Activated T-helper 1 cell treated with anti-CD3 and anti-CD28 coated beads, Interleukin-12 subunit alpha, Interleukin-12 subunit beta, Interleukin-2, Interleukin-4 antibody, amounts not matched to agents 30 ng/mL and 10 ng/mL and 1 ng/mL, durations not matched to agents 14 hours and 24 hours and 36 hours (primary cell): ENCODE measurements at regions of chr14 and their contacts with region 1.

Region 1: GRCh38 chr14:64540208-64541157 is at the start of gene HSPA2:
- DNase-seq: peak; percentile 94
- H3K4me3 Mint-ChIP-seq: peak within 1 kb of the TSS; percentile 91
- H3K27ac Mint-ChIP-seq: peak within 1 kb of the TSS; percentile 92
- H3K4me1 Mint-ChIP-seq: peaks cover 42% of the 10 kb centered on the region
- H3K27me3 Mint-ChIP-seq: peaks cover 56% of the 10 kb centered on the region
- total RNA-seq, gene HSPA2: 11.2 and 11.6 TPM in 2 replicates

Region 2: GRCh38 chr14:64266239-64266638 is 274.2 kb before region 1 on chr14:
- intact Hi-C with region 1: no loop called
- DNase-seq: no peak
- H3K4me3 Mint-ChIP-seq: no peak overlapping the region
- H3K27ac Mint-ChIP-seq: peak overlapping the region; percentile 5
- H3K4me1 Mint-ChIP-seq: peaks cover 25% of the 10 kb centered on the region
- H3K27me3 Mint-ChIP-seq: peaks cover 2% of the 10 kb centered on the region

Region 3: GRCh38 chr14:64510825-64511671 is 29.4 kb before region 1 on chr14:
- intact Hi-C with region 1: loop called (anchors 1 kb)
- DNase-seq: peak; percentile 58
- H3K4me3 Mint-ChIP-seq: peak overlapping the region; percentile 63
- H3K27ac Mint-ChIP-seq: peak overlapping the region; percentile 69
- H3K4me1 Mint-ChIP-seq: peaks cover 74% of the 10 kb centered on the region
- H3K27me3 Mint-ChIP-seq: no peaks in the 10 kb centered on the region

Region 4: DNA sequence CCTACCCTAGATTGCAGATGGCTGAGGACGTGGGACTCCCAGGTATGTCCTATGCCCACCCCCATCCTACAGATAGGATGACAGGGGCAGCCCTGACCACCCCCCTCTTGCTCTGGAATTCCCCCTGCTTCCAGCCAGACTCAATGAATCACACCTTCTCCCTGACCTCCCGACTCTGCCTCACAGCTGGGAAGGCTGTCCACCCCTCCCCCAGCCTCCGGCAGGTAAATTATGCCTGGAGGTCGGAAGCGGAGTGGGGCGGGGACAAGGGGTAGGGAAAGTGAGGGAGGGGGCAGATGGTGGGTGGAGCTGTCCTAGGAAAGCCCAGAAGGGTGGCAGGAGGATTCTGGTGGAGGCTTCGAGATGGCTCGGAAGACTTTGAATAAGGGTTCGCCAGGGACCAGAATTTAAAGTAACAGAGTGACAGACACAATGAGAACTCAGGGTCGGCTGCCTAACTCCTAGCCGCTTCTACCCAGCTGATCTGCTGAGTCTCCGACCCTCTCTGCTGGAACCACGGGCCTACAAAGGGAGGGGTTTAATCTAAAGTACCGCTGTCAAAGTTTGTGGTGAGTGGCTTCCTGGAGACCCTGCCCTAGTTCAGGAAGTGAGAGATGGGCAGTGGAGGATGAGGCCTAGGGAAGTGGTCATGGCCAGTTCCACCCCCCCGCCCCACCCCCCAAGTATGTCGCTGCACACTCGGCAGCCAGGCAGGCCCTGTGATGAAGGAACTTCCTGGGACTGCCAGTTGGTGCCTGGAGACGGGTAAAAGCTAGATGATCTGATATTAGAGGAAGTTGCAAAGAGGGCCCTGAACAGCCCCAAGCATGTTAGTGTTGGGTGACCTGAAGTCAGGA is 167.9 kb after region 1 on chr14:
- intact Hi-C with region 1: loop called (anchors 5 kb)
- DNase-seq: peak; percentile 57
- H3K4me3 Mint-ChIP-seq: peak overlapping the region; percentile 47
- H3K27ac Mint-ChIP-seq: peak overlapping the region; percentile 83
- H3K4me1 Mint-ChIP-seq: peaks cover 70% of the 10 kb centered on the region
- H3K27me3 Mint-ChIP-seq: peaks cover 10% of the 10 kb centered on the region

Region 5: DNA sequence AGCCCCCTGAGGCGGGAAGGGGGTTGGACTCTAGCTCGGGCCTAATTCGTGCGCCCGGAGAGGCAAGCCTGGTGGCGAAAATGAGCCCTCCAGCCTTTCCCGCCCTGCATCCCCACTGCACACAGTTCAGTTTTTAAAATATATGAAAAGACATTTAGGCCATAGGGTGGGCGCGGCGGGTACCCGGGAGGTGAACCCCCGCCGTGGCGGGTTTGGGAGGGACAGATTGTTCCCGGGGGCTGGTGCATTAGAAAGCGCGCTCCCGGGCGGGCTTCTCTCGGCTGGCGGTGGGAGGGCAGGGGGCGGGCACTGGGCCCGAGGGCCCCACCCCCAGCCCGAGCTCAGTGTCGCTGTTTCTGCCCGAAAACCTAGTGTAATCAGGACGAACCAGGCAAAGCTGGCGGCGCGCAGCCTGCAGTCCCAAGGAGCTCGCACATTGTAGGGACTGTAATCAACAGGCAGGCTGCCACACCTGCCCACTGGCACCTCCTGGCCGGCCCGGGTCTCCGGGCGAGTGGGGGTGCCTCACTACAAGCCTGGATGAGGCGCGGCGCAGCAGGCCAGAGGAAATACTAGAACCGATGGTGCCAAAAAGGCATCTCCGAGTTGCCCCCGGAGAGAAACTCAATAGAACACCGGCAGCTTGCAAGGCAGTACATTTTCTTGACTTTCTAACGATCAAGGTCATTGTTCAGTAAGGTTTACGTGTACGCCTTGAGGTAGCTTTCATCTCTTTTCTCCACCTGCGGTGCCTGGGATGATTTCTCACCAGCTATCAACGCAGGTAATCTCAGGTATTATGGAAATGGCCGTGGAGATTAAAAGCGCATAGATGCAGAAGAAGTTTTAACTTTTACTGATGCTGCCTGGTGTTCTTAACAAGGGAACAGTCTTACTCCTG is 340.0 kb after region 1 on chr14:
- intact Hi-C with region 1: loop called (anchors 10 kb)
- DNase-seq: peak; percentile 46
- H3K4me3 Mint-ChIP-seq: peak overlapping the region; percentile 79
- H3K27ac Mint-ChIP-seq: no peak overlapping the region
- H3K4me1 Mint-ChIP-seq: no peaks in the 10 kb centered on the region
- H3K27me3 Mint-ChIP-seq: peaks cover 68% of the 10 kb centered on the region